ENCODE measurements at regions of chr16 and their contacts with region 1.

Region 1: DNA sequence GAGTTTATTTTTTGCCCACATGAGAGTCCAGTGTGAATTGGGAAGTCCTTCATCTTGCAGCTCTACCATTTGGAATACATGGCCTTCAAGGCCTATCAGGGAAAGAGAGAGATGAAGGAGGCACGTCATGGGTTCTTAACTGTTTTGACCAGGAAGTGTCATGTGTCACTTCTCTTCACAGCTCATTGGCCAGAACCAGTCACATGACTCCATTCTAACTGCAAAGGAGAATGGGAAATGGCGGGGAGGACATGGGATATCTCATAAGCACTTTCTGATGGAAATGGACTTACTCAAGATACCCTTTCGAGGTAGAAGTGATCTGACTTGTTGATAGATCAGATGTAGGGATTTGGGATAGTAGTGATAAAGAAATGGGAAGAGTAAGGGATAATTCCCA is 57.9 kb upstream of the CES5A start:
- DNase-seq: no peak
- ATAC-seq: no peak

Region 2: GRCh38 chr16:56013962-56014552 is 81.0 kb after region 1 on chr16:
- intact Hi-C with region 1: loop called in 1 of 2 experiments (anchors 10 kb)
- DNase-seq: peak; percentile 70
- ATAC-seq: peak in 1 of 2 donors; percentile 39

Measured in left cardiac atrium (tissue), 4 donors.